PC-3 (cell line): ENCODE measurements at regions of chr1 and their contacts with region 1.

Region 1: GRCh38 chr1:6205849-6206519 is at the start of gene RNF207:
- DNase-seq: peak; percentile 95
- ATAC-seq: peak; percentile 69
- H3K4me3 ChIP-seq: peak within 1 kb of the TSS; percentile 79
- H3K27ac ChIP-seq: peak within 1 kb of the TSS; percentile 81
- H3K4me1 ChIP-seq: peaks cover 14% of the 10 kb centered on the region; the same call in 1 of the 2 replicates
- H3K27me3 ChIP-seq: no peaks in the 10 kb centered on the region
- CTCF ChIP-seq: no peak
- total RNA-seq, gene RNF207: 95.4 and 128 TPM in 2 replicates

Region 2: DNA sequence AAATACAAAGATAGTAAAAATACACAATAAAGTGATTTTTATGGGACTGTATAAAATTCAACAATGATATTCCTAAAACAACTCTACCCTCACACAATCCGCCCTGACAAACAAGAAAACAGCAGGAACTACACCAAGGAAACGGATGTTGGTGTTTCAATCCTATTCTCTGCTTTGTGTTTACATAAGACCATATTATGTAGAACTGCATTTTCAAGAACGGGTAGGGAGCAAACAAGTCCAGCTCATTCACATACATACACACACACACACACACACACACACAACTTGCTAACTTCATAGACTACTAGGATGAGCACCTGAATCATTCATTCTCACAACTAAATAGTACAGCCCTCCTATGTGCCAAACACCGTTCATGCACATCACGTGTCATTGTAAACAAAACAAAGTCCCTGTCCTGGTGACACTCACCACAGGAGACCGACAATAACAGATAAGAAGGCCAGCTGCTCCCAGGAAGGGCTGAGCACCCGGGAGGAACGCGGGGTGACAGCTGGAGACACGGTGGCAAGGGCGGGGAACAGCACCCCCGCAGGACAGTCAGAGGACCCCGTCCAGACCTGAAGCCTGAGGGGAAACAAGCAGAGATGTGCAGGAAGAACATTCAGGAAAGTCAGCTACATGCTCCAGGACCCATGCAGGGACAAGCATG is 256.8 kb before region 1 on chr1:
- CTCF ChIA-PET with region 1: no interaction called
- POLR2A ChIA-PET with region 1: no interaction called
- intact Hi-C with region 1: no loop called
- DNase-seq: peak; percentile 17
- ATAC-seq: peak; percentile 83
- H3K4me3 ChIP-seq: no peak overlapping the region
- H3K27ac ChIP-seq: no peak overlapping the region
- H3K4me1 ChIP-seq: peaks cover 18% of the 10 kb centered on the region
- H3K27me3 ChIP-seq: no peaks in the 10 kb centered on the region
- CTCF ChIP-seq: peak; percentile 44

Region 3: GRCh38 chr1:6220241-6220640 is 14.3 kb after region 1 on chr1:
- CTCF ChIA-PET with region 1: interaction called, 19 read pairs
- POLR2A ChIA-PET with region 1: interaction called, 16 read pairs
- intact Hi-C with region 1: no loop called
- DNase-seq: peak; percentile 99
- ATAC-seq: peak; percentile 90
- H3K4me3 ChIP-seq: peak overlapping the region; percentile 18; the same call in 1 of the 2 replicates
- H3K27ac ChIP-seq: peak overlapping the region; percentile 84
- H3K4me1 ChIP-seq: peaks cover 61% of the 10 kb centered on the region
- H3K27me3 ChIP-seq: no peaks in the 10 kb centered on the region
- CTCF ChIP-seq: no peak

Region 4: DNA sequence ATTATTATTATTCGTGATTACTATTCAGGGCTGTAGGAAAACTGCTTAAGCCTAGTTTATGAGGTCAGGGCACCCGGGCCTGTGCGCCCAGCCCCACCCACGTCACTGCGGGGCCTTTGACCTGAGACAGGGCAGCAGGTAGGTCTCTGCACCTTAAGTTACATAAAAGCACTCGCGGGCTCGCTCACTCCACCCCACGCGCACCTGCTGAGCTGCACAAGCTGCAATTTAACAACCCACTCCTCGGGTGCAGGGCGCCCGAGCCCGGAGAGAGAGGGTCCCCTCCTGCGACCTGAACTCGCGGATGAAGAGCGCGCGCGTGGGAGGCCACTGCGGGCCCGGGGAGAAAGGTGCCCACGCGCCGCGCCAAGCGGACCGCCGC is 29.3 kb after region 1 on chr1:
- CTCF ChIA-PET with region 1: interaction called, 18 read pairs
- POLR2A ChIA-PET with region 1: interaction called, 7 read pairs
- intact Hi-C with region 1: loop called (anchors 1 kb)
- DNase-seq: no peak
- ATAC-seq: peak; percentile 10
- H3K4me3 ChIP-seq: peak overlapping the region; percentile 82
- H3K27ac ChIP-seq: peak overlapping the region; percentile 4
- H3K4me1 ChIP-seq: peaks cover 15% of the 10 kb centered on the region
- H3K27me3 ChIP-seq: no peaks in the 10 kb centered on the region
- CTCF ChIP-seq: no peak

Region 5: GRCh38 chr1:6300342-6301048 is 94.5 kb after region 1 on chr1:
- CTCF ChIA-PET with region 1: interaction called, 4 read pairs
- POLR2A ChIA-PET with region 1: no interaction called
- intact Hi-C with region 1: loop called (anchors 5 kb)
- DNase-seq: peak; percentile 92
- ATAC-seq: peak; percentile 66
- H3K4me3 ChIP-seq: peak overlapping the region; percentile 30
- H3K27ac ChIP-seq: peak overlapping the region; percentile 94
- H3K4me1 ChIP-seq: peaks cover 53% of the 10 kb centered on the region
- H3K27me3 ChIP-seq: no peaks in the 10 kb centered on the region
- CTCF ChIP-seq: peak; percentile 47

Region 6: DNA sequence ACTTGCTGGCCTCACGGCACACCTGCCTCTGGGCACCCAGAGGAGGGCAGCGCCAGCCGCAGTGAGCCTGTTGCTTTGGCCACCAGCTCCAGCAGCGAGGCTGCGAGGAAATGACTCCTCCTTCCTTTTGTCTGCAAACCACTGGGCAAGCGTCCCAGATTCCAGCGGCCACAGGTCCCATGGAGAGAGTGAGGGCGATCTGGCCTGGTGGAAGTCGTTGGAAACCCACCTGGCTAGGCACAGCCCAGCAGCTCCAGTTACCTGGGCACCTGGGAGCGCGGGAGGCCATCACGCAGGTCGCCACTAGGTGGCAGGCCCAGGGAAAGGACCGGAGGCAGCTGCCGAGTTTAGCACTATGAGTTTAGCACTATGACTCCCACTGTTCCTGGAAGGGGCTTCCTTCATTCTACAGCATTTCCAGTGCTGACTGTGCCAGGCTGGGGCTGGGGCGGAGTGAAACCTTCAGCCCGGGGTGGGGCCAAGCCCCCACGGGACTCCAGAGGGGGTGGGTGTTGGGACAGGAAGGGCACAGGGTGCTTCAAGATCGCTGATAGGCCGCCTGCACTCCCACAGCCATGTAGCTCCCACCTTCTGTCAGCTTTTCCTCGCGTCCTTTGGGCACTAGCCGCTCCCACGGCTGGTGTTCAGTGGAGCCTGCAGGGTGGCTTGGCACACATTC is 217.5 kb after region 1 on chr1:
- CTCF ChIA-PET with region 1: interaction called, 10 read pairs
- POLR2A ChIA-PET with region 1: no interaction called
- intact Hi-C with region 1: no loop called
- DNase-seq: peak; percentile 98
- ATAC-seq: peak; percentile 46
- H3K4me3 ChIP-seq: peak overlapping the region; percentile 73
- H3K27ac ChIP-seq: peak overlapping the region; percentile 73
- H3K4me1 ChIP-seq: peaks cover 63% of the 10 kb centered on the region
- H3K27me3 ChIP-seq: no peaks in the 10 kb centered on the region
- CTCF ChIP-seq: peak; percentile 98